ENCODE measurements at regions of chr11 and their contacts with region 1.

Region 1: GRCh38 chr11:123246749-123247495 is 51.9 kb upstream of the CLMP start:
- DNase-seq: peak; percentile 89
- H3K4me3 Mint-ChIP-seq: no peak overlapping the region
- H3K27ac Mint-ChIP-seq: no peak overlapping the region
- H3K4me1 Mint-ChIP-seq: peaks cover 6% of the 10 kb centered on the region
- H3K27me3 Mint-ChIP-seq: peaks cover 4% of the 10 kb centered on the region

Region 2: DNA sequence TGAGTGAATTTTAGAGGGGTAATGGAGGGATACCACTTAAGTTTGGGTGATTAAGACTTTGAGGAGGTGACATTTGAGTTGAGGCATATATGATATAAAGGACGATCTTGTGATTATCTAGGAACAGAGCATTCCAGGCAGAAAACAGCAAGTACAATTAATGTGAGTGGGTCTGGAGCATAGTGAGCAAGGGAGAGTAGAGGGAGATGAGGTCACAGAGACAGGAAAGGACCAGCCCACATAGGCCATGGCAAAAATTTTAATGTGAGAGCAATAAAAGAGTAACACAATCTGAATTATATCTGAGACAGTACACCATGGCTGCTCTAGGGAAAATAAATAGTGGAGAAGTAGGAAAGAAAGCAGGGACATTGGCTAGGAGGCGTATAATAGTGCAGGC is 170.4 kb before region 1 on chr11:
- CTCF ChIA-PET with region 1: no interaction called
- POLR2A ChIA-PET with region 1: no interaction called
- intact Hi-C with region 1: no loop called
- DNase-seq: no peak
- H3K4me3 Mint-ChIP-seq: no peak overlapping the region
- H3K27ac Mint-ChIP-seq: no peak overlapping the region
- H3K4me1 Mint-ChIP-seq: peaks cover 37% of the 10 kb centered on the region
- H3K27me3 Mint-ChIP-seq: no peaks in the 10 kb centered on the region

Region 3: DNA sequence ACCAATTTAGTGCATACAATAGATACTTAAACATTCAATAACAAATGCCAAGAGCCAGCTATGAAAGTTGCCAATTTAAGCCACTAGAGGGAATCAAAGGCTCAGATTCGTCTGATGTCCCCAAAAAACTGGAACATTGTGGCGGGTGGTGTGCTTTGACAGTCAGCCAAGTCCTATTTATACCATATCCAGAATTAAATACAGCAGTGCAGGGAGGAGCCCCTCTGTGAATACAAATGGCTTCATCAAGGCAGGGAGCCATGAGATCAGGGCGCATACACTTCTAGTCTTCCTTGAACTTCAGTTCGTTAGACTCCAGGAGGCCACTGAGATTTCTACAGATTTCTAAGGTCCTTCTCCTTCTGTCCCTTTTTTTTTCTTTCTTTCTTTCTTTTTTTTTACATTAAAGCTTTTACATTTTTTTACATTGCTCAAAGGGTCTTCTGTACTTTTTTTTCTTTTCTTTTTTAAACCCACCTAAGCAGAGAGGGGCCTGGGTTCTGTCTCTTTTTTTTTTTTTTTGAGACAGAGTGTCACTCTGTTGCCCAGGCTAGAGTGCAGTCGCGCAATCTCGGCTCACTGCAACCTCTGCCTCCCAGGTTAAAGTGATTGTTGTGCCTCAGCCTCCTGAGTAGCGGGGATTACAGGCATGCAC is 143.5 kb before region 1 on chr11:
- CTCF ChIA-PET with region 1: interaction called, 351 read pairs
- POLR2A ChIA-PET with region 1: no interaction called
- intact Hi-C with region 1: loop called (anchors 2 kb)
- DNase-seq: peak; percentile 42
- H3K4me3 Mint-ChIP-seq: no peak overlapping the region
- H3K27ac Mint-ChIP-seq: no peak overlapping the region
- H3K4me1 Mint-ChIP-seq: peaks cover 16% of the 10 kb centered on the region
- H3K27me3 Mint-ChIP-seq: no peaks in the 10 kb centered on the region

Region 4: GRCh38 chr11:123129920-123130319 is 117.0 kb before region 1 on chr11:
- CTCF ChIA-PET with region 1: interaction called, 11 read pairs
- POLR2A ChIA-PET with region 1: no interaction called
- intact Hi-C with region 1: no loop called
- DNase-seq: no peak
- H3K4me3 Mint-ChIP-seq: no peak overlapping the region
- H3K27ac Mint-ChIP-seq: no peak overlapping the region
- H3K4me1 Mint-ChIP-seq: peaks cover 3% of the 10 kb centered on the region
- H3K27me3 Mint-ChIP-seq: no peaks in the 10 kb centered on the region

Region 5: DNA sequence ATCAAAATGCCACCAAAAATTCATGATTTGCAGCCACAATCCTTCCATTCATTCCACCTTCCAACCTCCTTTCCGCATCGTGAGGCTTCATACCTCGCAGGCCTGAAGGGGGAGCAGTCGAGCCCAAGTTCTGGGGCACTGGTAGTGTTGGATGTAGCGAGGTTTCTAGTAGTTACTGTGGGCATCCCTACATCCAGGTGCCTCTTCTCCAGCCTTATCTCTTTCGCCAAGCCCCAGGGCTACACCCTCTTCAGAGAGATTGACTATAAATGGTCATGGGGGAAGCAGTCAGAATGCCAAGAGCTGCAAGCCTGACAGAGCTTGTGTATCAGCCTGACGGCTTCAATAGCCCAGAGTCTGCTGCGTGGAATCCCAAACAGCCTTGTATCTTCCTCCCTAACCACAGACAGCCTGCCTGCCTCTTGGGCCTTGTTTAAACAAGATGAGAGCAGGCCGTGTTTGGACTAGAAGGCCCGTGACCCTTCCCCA is 80.8 kb before region 1 on chr11:
- CTCF ChIA-PET with region 1: interaction called, 32 read pairs
- POLR2A ChIA-PET with region 1: no interaction called
- intact Hi-C with region 1: loop called (anchors 2 kb)
- DNase-seq: peak; percentile 38
- H3K4me3 Mint-ChIP-seq: no peak overlapping the region
- H3K27ac Mint-ChIP-seq: no peak overlapping the region
- H3K4me1 Mint-ChIP-seq: no peaks in the 10 kb centered on the region
- H3K27me3 Mint-ChIP-seq: no peaks in the 10 kb centered on the region

Region 6: GRCh38 chr11:123261345-123262106 is 14.6 kb after region 1 on chr11:
- CTCF ChIA-PET with region 1: interaction called, 34 read pairs
- POLR2A ChIA-PET with region 1: no interaction called
- intact Hi-C with region 1: no loop called
- DNase-seq: peak; percentile 82
- H3K4me3 Mint-ChIP-seq: no peak overlapping the region
- H3K27ac Mint-ChIP-seq: no peak overlapping the region
- H3K4me1 Mint-ChIP-seq: no peaks in the 10 kb centered on the region
- H3K27me3 Mint-ChIP-seq: peaks cover 13% of the 10 kb centered on the region